Esophagus muscularis mucosa (tissue), 4 donors: ENCODE measurements at regions of chr3 and their contacts with region 1.

Region 1: GRCh38 chr3:42652611-42653302 is 740 bp upstream of the ZBTB47 start:
- DNase-seq: peak; percentile 92
- H3K4me3 ChIP-seq: peak overlapping the region; percentile 82 to 96 (median 92)
- H3K27ac ChIP-seq: peak overlapping the region; percentile 91 to 98 (median 96)
- H3K4me1 ChIP-seq: peaks cover 43 to 73% (median 68%) of the 10 kb centered on the region in 4 donors
- H3K27me3 ChIP-seq: no peaks in the 10 kb centered on the region
- CTCF ChIP-seq: no peak
- EP300 ChIP-seq: no peak
- POLR2A ChIP-seq: peak; percentile 90

Region 2: DNA sequence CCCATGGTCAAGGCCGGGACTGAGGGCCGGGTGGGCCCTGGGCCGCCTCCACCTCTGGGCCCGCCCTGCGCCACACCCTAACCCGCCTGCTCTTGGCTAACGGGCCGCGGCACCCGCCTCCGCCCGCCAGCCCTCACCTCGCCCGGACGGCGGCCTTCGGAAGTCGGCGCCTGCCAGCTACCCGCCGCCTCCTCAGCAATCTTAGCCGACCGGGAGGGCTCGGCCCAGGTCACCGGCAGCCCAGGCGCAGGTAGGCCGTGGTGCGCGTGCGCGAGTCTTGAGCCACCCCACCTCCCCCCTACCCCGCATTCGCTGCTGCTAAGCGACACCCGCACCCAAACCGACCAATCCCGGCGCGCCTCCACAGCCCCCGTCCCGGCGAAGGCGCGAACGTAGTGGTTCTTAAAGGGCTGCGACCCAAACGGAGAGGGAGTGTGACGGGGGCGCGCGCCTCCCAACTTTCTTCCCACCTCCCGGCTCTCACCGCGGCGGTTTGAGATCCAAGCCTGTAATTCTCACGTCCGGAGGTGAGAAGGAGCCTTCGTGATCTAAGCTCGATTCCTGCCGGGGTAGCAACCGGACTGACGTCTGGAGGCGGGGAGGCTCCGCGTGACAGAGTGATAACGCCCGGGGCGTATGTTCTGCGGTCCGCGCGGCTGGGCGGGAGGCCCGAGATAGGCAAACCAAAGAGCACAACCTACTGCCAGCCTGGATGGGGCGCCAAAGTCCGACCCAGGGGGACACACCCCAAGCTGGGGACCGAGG is 70.9 kb before region 1 on chr3 and contains the start of gene SEC22C:
- intact Hi-C with region 1: loop called (anchors 5 kb)
- DNase-seq: peak; percentile 98
- H3K4me3 ChIP-seq: peak within 1 kb of the TSS; percentile 76 to 97 (median 82)
- H3K27ac ChIP-seq: peak within 1 kb of the TSS; percentile 87 to 93 (median 90)
- H3K4me1 ChIP-seq: peaks cover 15 to 37% (median 28%) of the 10 kb centered on the region in 4 donors
- H3K27me3 ChIP-seq: no peaks in the 10 kb centered on the region
- CTCF ChIP-seq: peak in 2 of 3 experiments; percentile 21 to 26
- EP300 ChIP-seq: no peak
- POLR2A ChIP-seq: peak; percentile 58
- total RNA-seq, gene SEC22C: 52.7 to 62.7 (median 57.9) TPM

Region 3: DNA sequence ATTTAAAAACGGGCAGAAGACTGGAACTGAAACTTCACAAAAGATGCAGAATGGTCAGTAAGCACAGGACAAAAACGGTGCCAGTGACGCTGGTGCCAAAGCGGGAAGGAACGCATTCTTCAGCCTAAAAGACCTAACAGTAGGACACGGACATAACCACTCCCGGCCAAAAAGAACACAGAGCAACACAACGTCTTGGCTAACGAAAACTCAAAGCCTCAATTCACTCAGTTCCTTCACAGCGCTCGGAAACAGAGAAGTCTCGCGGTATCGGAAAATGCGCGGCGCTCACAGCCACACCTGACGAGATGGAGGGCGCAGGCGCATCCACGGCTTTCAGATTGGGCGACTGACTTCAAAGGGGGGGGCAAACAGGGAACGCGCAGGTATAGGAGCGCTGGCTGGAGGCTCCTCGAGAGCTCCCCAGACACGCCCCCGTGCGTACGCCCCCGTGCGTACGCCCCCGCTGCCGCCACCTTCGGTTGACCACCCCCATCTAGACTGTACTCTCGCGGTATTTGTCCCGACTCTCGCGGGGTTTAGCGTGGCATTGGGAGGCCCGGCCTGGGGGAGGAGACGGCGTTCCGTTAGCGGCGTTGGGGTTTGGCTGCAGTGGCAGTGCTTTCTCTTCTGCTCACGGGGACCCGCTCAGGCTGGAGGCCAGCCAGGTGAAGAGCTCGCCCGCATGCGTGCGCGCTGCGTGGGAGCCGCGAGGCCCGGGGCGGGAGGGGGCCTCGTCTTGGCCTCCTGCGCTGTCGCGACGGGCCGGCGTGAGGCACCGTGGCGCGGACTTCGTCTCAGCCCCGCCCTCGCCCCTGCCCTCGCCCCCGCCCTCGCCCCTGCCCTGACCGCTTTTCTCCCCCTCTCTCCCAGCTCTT is 52.4 kb before region 1 on chr3 and contains the start of gene NKTR:
- intact Hi-C with region 1: loop called (anchors 5 kb)
- DNase-seq: peak; percentile 99
- H3K4me3 ChIP-seq: peak within 1 kb of the TSS; percentile 85 to 99 (median 90)
- H3K27ac ChIP-seq: peak within 1 kb of the TSS; percentile 96 to 99 (median 98)
- H3K4me1 ChIP-seq: peaks cover 16 to 36% (median 33%) of the 10 kb centered on the region in 4 donors
- H3K27me3 ChIP-seq: no peaks in the 10 kb centered on the region
- CTCF ChIP-seq: peak in 1 of 3 experiments; percentile 9
- EP300 ChIP-seq: no peak
- POLR2A ChIP-seq: peak; percentile 71
- total RNA-seq, gene NKTR: 24.7 to 73.1 (median 36.0) TPM

Region 4: DNA sequence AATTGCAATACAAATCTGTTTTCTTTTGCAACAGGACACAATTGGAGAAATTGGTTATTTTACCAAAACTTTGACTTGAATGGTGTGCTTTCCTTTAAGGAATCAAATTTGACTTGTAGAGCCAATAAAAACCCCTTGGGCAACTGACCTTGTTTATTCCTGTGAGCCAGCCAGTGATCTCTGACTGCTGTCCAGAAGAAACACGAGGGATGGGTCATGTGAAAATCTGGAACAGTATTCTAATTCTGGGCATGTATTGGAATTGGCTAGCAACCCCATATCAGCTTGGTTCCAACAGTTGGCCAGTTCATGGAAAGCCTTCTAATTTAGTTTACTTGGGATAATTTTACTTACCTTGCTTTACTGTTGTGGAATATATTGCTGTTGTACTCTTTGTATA is 68.9 kb after region 1 on chr3:
- intact Hi-C with region 1: no loop called
- DNase-seq: no peak
- H3K4me3 ChIP-seq: no peak overlapping the region
- H3K27ac ChIP-seq: no peak overlapping the region
- H3K4me1 ChIP-seq: peaks cover 0 to 10% (median 0%) of the 10 kb centered on the region in 4 donors
- H3K27me3 ChIP-seq: no peaks in the 10 kb centered on the region
- CTCF ChIP-seq: no peak
- EP300 ChIP-seq: no peak
- POLR2A ChIP-seq: no peak

Region 5: GRCh38 chr3:42739401-42740158 is 86.8 kb after region 1 on chr3:
- intact Hi-C with region 1: loop called (anchors 5 kb)
- DNase-seq: no peak
- H3K4me3 ChIP-seq: no peak overlapping the region
- H3K27ac ChIP-seq: no peak overlapping the region
- H3K4me1 ChIP-seq: peaks cover 7 to 8% (median 7%) of the 10 kb centered on the region in 4 donors
- H3K27me3 ChIP-seq: no peaks in the 10 kb centered on the region
- CTCF ChIP-seq: no peak
- EP300 ChIP-seq: no peak
- POLR2A ChIP-seq: no peak